A549 (cell line): ENCODE measurements at regions of chr17 and their contacts with region 1.

Region 1: DNA sequence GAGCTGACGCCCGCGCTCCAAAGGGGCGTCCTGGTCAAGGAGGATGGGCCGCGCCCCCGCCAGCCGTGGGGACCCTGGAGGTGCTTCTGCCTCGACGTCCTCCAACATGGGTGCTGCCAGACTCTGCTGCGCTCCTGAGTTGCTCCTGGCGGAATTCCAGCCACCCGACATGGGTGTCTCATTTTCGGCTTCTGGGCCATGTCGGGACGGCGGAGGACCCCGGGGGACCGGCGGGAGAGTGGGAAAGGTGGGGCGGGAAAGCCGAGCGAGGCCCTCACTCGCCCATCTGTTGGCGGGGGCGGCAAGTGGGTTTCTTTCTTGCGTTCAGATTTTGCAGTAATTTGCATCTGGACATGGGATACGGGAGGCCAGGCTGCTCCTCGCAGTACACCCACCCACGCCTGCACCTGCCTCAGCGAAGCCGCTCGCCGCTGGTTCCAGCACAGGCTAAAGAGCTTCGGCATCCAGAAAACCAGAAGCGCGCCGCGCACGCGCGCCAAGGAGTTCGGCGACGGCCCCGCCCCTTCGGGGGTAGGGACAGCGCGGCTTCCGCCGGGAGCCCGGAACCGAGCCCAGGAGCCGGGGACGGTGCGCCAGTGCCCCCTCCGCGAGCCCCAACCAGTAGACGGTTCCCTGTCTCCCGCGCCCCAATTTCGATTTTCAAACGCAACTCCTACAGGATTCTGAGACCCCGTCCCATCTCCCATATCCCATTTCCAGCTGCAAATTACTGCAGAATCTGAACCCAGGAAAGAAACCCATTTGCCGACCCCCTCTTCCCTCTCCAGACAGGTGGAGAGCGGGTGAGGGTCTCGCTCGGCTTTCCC is at the start of gene ARMC7:
- DNase-seq: peak; percentile 85 to 97
- ATAC-seq: peak; percentile 78 to 80
- H3K4me3 ChIP-seq: peak within 1 kb of the TSS; percentile 77
- H3K27ac ChIP-seq: peak within 1 kb of the TSS; percentile 91 to 94
- H3K4me1 ChIP-seq: peaks cover 22% of the 10 kb centered on the region
- CTCF ChIP-seq: peak; percentile 18; the same call in 1 of the 3 replicates
- EP300 ChIP-seq: no peak
- POLR2A ChIP-seq: peak; percentile 83
- RAD21 ChIP-seq: peak; percentile 32 to 46
- polyA plus RNA-seq, gene ARMC7: 8.5 and 9.5 TPM in 2 replicates

Region 2: DNA sequence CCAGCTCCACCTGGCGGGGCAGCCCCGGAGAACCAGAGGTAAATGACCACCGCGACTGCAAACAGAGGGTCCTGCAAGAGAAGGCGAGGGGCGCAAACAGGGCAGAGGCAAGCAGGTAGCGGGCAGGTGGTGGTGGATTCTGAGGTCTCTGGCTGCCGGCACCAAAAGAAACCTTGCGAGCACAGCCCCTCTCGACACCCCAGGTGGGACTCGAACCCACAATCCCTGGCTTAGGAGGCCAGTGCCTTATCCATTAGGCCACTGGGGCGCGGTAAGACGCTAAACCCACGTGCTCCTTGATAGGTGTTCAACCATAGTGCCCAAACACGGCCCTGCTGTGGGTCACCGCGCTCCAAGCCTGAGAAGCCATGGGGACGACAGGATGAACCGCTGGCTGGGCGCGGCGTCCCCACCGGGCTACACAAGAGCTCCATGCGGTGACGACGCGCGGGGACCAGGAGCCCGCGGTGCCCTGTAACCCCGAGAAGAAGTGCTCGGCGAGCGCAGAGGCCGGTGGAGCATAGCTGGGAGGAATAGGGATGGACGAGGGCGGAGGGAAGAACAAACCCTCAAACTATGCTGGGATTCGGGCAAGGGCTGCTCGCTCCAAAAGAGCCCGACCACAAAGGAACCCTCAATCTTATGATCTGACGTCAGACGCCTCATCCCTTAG is 75.2 kb before region 1 on chr17:
- CTCF ChIA-PET with region 1: interaction called, 21 read pairs
- POLR2A ChIA-PET with region 1: no interaction called
- DNase-seq: peak; percentile 81 to 97
- ATAC-seq: peak; percentile 57 to 71
- H3K4me3 ChIP-seq: peak overlapping the region; percentile 73
- H3K27ac ChIP-seq: peak overlapping the region; percentile 97
- H3K4me1 ChIP-seq: peaks cover 30% of the 10 kb centered on the region
- CTCF ChIP-seq: no peak
- EP300 ChIP-seq: no peak
- POLR2A ChIP-seq: no peak
- RAD21 ChIP-seq: no peak; a peak in 1 of 5 replicates

Region 3: GRCh38 chr17:75124041-75124818 is 14.6 kb after region 1 on chr17:
- CTCF ChIA-PET with region 1: interaction called, 3,429 read pairs
- POLR2A ChIA-PET with region 1: interaction called, 70 read pairs
- DNase-seq: peak; percentile 99 to 100
- ATAC-seq: peak; percentile 93
- H3K4me3 ChIP-seq: peak overlapping the region; percentile 31
- H3K27ac ChIP-seq: peak overlapping the region; percentile 92 to 97
- H3K4me1 ChIP-seq: peaks cover 61% of the 10 kb centered on the region
- CTCF ChIP-seq: no peak; the same call in 2 of the 3 replicates
- EP300 ChIP-seq: peak; percentile 30 to 80; a peak in 3 of 5 replicates
- POLR2A ChIP-seq: peak; percentile 62
- RAD21 ChIP-seq: peak; percentile 30 to 39; a peak in 4 of 5 replicates

Region 4: GRCh38 chr17:75173526-75173925 is 63.9 kb after region 1 on chr17:
- CTCF ChIA-PET with region 1: interaction called, 270 read pairs
- POLR2A ChIA-PET with region 1: interaction called, 17 read pairs
- DNase-seq: no peak
- ATAC-seq: no peak
- H3K4me3 ChIP-seq: no peak overlapping the region
- H3K27ac ChIP-seq: no peak overlapping the region
- H3K4me1 ChIP-seq: 0 out of 3 replicates have a peak, but pooled peaks cover 3% of the 10 kb centered on the region
- CTCF ChIP-seq: no peak
- EP300 ChIP-seq: no peak
- POLR2A ChIP-seq: no peak
- RAD21 ChIP-seq: no peak

Region 5: DNA sequence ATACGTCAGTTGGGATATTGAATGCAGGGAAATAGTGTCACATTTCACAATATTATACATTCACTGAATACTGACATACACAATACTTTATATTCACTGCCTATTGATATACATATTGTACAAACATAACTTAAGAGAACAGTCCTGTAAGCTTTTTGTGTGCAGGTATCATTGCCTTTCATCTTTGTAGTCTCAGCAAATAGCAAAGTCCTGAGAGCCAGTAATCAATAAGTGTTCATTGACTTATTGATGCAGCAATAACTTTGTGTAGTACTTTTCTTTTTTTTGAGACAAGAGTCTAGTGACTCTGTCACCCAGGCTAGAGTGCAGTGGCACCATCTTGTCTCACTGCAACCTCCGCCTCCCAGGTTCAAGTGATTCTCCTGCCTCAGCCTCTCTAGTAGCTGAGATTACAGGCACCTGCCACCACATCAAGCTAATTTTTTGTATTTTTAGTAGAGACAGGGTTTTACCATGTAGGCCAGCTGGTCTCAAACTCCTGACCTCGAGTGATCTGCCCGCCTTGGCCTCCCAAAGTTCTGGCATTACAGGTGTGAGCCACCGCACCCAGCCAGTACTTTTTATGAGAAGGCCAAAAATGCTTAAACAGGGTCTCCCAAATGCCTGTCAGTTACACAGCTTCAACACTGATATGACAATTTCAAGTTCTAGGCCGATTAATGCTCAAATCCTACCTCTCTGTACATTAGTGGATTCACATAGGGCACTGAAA is 90.4 kb after region 1 on chr17:
- CTCF ChIA-PET with region 1: interaction called, 543 read pairs
- POLR2A ChIA-PET with region 1: interaction called, 15 read pairs
- DNase-seq: no peak
- ATAC-seq: no peak
- H3K4me3 ChIP-seq: no peak overlapping the region
- H3K27ac ChIP-seq: no peak overlapping the region
- H3K4me1 ChIP-seq: peaks cover 4% of the 10 kb centered on the region; the same call in 1 of the 3 replicates
- CTCF ChIP-seq: no peak
- EP300 ChIP-seq: no peak
- POLR2A ChIP-seq: no peak
- RAD21 ChIP-seq: no peak

Region 6: DNA sequence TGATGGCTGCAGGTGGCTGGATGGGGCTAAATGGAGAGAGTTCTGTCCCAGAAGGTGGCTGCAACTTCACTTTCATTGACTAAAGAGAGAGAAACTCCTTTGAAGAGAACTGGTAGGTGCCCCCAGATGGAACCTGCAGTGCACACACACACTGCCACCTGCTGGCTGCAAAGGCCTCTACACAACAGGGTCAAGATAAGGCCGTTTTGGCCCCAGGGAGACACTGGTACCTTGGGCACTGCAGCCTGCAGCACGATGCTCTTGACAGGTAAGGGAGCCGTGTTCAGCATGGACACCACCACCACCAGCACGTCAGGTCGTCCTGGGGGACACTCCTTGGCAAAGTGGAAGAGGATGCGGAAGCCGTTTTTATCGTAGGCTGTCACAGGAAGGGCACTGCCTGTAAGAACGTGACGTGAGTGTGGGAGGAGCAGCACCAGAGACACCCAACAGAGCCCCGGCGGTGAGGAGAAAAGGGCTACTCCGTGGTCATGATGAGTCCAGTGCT is 129.1 kb after region 1 on chr17:
- CTCF ChIA-PET with region 1: interaction called, 118 read pairs
- POLR2A ChIA-PET with region 1: no interaction called
- DNase-seq: peak; percentile 89 to 96
- ATAC-seq: peak; percentile 71 to 84
- H3K4me3 ChIP-seq: no peak overlapping the region
- H3K27ac ChIP-seq: no peak overlapping the region
- H3K4me1 ChIP-seq: 0 out of 3 replicates have a peak, but pooled peaks cover 6% of the 10 kb centered on the region
- CTCF ChIP-seq: peak; percentile 92
- EP300 ChIP-seq: no peak
- POLR2A ChIP-seq: no peak
- RAD21 ChIP-seq: peak; percentile 57 to 64